ENCODE measurements at regions of chr10 and their contacts with region 1.

Region 1: GRCh38 chr10:49538381-49539319 is at the start of gene ERCC6:
- DNase-seq: peak; percentile 98
- CTCF ChIP-seq: peak; percentile 5

Region 2: DNA sequence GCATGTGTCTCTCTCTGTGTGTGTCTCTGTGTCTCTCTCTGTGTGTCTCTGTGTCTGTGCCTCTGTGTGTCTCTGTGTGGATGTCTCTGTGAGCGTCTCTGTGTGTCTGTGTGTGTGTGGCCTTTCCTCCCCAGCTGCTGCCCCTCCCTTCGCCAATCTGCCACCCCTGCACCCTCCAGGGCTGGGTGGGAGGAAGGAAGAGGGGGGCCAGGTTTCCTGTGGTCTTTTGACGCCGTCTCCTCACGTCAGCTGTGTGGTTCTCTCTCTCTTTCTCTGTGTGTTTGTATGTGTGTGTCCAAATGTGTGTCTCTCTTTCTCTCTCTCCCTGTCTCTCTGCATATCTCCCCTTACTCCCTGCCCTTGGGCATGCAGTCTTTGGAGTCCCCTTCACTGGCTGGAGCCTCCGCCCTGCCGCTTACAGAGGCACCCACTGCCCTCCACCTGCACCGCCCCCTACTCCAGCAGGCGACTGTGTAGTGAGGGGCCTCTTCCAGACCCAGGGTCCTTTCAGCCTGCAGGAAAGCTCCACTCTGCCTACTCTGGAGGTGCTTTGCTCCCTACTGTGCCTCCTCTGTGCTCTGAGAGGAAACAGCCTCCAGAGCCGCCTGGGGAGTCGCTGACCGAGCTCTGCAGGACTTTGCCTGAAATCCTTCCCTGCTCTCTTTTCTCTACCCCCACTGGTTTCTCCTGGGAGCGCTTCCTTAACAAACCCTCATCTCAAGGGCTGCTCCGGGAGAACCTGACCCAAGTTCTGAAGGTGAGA is 283.9 kb before region 1 on chr10:
- CTCF ChIA-PET with region 1: no interaction called
- POLR2A ChIA-PET with region 1: no interaction called
- DNase-seq: no peak
- CTCF ChIP-seq: no peak

Region 3: GRCh38 chr10:49518982-49519578 is 19.6 kb before region 1 on chr10:
- CTCF ChIA-PET with region 1: interaction called, 71 read pairs
- POLR2A ChIA-PET with region 1: interaction called, 3 read pairs
- DNase-seq: peak; percentile 42
- CTCF ChIP-seq: peak; percentile 49

Region 4: GRCh38 chr10:49579621-49580020 is 41.0 kb after region 1 on chr10:
- CTCF ChIA-PET with region 1: no interaction called
- POLR2A ChIA-PET with region 1: no interaction called
- DNase-seq: no peak
- CTCF ChIP-seq: no peak

Region 5: DNA sequence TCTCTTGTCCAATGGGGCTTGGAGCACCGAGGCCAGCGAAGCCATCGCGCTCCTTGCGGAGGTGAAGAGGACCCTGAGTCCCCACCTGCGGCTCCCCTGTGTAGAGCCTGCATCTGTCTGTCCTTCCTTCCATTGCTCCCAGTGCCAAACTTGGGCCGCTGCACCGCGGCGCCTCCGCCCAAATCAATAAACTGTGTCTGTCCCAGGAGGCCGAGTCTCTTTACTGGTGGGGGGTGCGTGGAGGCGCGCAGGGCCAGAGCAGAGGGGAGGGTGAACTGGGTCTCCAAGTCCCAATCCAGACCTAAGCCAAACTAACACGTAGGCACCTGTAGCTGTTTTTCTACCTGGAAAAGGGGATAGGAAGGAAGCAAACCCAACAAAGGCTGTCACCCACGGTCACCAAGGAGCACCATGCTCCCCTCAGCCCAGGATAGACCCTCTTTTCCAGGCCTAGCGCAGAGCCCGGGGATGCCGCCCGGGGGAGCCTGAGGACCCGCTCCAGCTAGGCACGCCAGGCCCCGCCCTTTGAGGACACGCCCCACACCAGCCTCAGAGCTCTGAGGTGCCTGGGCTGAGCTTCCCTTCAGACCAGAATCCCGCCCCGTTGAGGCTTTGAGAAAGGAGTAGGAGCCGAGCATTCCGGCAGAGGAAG is 74.0 kb after region 1 on chr10:
- CTCF ChIA-PET with region 1: no interaction called
- POLR2A ChIA-PET with region 1: no interaction called
- DNase-seq: no peak
- CTCF ChIP-seq: no peak

Region 6: GRCh38 chr10:49711516-49711915 is 172.9 kb after region 1 on chr10:
- CTCF ChIA-PET with region 1: no interaction called
- POLR2A ChIA-PET with region 1: no interaction called
- DNase-seq: no peak
- CTCF ChIP-seq: no peak

Measured in GM10248 (cell line).